ENCODE measurements at regions of chr15 and their contacts with region 1.

Region 1: GRCh38 chr15:90101969-90102890 is at the start of gene IDH2:
- DNase-seq: peak; percentile 75 to 86
- ATAC-seq: peak; percentile 75 to 94 (median 82)
- H3K4me3 ChIP-seq: peak within 1 kb of the TSS; percentile 64 to 100 (median 93)
- H3K27ac ChIP-seq: peak within 1 kb of the TSS; percentile 97 to 100 (median 99)
- H3K4me1 ChIP-seq: peaks cover 5 to 80% (median 50%) of the 10 kb centered on the region in 9 donors
- H3K27me3 ChIP-seq: no peaks in the 10 kb centered on the region
- CTCF ChIP-seq: peak in 1 of 9 donors; percentile 4
- total RNA-seq, gene IDH2: 731 to 1,135 (median 971) TPM

Region 2: DNA sequence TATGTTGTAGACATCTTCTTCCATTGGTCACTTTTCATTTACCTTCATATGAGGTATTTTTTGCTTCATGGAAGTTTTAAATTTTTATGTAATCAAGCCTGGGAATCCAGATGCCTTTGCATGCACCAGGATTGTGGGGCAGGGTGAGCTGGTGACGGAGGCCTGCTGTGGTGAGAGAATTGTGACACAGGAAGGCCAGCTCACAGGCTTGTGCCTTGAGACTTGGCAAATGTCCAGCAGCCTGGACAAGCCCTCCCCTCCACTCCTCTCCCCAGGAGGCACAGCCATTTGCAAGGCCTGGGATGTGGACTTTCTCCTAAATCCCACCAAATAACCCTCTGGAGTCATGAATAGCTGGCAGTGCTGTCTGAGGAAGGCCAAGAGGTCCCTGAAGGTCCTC is 673.2 kb before region 1 on chr15:
- intact Hi-C with region 1: no loop called
- DNase-seq: no peak
- ATAC-seq: no peak
- H3K4me3 ChIP-seq: no peak overlapping the region
- H3K27ac ChIP-seq: no peak overlapping the region
- H3K4me1 ChIP-seq: peaks cover 0 to 16% (median 7%) of the 10 kb centered on the region in 9 donors
- H3K27me3 ChIP-seq: peaks cover 0 to 36% (median 23%) of the 10 kb centered on the region in 7 donors
- CTCF ChIP-seq: no peak

Region 3: DNA sequence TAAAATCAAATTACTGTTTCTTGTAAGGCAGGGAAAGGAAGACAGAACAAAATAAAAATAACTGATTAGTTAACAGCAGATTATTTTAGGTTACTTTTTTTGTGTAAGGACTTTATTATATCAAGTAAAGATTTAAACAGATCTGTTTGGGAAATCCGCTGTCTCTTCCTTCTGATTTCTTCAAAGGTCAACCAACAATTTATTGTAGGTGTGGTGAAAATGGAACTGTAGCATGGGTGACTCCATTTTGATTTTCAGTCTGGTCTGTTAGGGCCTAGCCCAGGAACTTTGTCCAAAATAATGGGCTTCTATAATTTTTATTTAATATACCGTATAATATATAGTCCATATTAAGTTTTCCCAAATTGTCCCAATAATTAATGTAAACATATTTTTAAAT is 13.6 kb after region 1 on chr15:
- intact Hi-C with region 1: no loop called
- DNase-seq: no peak
- ATAC-seq: no peak
- H3K4me3 ChIP-seq: no peak overlapping the region
- H3K27ac ChIP-seq: no peak overlapping the region
- H3K4me1 ChIP-seq: no peaks in the 10 kb centered on the region
- H3K27me3 ChIP-seq: no peaks in the 10 kb centered on the region
- CTCF ChIP-seq: no peak

Region 4: DNA sequence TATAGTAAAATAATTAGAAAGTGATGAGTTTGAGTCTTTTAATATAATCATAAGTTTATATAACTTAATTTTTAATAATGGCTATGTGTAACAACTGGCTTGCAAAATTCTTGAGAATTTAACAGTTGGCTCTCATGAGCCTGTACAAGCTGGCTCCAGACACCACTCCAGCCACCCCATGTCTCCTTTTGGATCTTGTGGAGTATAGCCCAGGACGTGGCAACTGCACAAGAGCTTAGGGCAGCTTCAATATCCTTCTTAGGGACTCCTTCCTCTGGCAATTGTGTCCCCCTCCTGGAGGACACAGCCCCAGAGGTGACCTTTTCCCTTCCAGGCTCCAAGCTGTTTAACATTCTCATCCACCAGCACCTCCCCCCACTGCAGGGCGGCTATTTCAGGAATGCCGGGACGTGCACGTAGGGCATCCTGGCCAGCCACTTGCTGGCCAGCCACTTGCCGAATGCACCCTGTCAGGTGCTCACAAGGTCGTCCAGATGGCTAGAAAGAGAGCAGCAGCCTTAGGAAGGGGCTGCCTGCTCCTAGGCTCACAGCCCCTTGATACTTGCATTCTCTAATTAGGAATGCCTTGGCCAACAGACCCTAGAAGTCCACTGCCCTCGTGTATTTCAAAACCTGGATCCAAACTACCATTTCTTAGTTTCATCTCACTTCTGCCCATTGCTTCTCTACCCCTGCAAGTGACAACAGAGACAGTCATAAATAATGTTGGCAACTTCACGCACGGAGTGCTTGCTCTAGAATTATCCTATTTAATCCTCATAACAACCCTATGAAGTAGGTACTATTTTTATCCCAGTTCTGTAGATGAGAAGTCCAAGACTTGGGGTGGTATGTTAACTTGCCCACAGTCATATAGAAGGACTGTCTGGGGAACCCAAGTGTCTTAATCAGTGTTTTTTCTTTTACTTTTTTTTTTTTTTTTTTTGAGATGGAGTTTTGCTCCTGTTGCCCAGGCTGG is 24.5 kb after region 1 on chr15:
- intact Hi-C with region 1: loop called in 2 of 10 experiments (anchors 2 kb)
- DNase-seq: peak; percentile 67 to 71
- ATAC-seq: peak; percentile 70 to 96 (median 90)
- H3K4me3 ChIP-seq: no peak overlapping the region
- H3K27ac ChIP-seq: peak overlapping the region; percentile 17 to 89 (median 80)
- H3K4me1 ChIP-seq: peaks cover 0 to 19% (median 4%) of the 10 kb centered on the region in 9 donors
- H3K27me3 ChIP-seq: peaks cover 0 to 3% (median 0%) of the 10 kb centered on the region in 7 donors
- CTCF ChIP-seq: no peak

Region 5: DNA sequence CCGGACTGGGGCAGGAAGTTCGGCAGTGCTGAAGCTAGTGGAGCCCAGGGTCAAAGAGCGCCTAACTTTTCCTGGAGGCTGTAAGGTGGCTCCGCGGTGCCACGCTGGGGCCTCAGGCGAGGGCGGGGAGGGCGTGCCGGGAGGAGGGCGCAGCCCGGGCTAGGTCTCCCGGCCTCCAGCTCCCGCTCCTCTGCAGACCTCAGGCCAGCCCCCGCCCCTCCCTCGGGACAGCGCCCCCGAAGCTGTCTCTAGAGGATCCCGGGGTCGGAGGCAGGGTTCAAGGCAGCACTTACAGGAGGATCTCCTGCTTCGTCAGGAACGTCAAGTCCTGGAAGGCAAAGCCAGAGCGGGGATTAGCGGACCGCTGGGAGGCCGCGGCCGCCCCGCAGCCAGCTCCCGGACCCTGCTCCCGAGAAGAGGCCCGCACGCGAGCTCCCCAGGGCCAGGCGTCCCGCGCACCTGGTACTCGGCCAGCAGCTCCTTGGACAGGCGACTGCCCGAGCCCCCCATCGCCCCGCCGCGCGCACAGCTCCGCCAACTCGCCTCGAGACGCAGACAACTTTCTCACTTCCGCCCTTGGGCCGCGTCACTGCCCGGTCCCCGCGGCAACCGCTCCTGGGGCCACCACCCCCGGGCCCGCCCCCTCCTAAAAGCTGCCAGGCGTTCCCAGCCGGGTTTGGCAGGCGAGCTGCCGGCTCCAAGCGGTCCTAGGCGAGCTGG is 131.3 kb after region 1 on chr15 and contains the start of gene CIB1:
- intact Hi-C with region 1: loop called in 2 of 10 experiments (anchors 5 to 10 kb)
- DNase-seq: peak; percentile 97 to 98
- ATAC-seq: peak; percentile 92 to 98 (median 95)
- H3K4me3 ChIP-seq: peak within 1 kb of the TSS; percentile 63 to 100 (median 90)
- H3K27ac ChIP-seq: peak within 1 kb of the TSS; percentile 77 to 98 (median 92)
- H3K4me1 ChIP-seq: peaks cover 4 to 56% (median 47%) of the 10 kb centered on the region in 9 donors
- H3K27me3 ChIP-seq: no peaks in the 10 kb centered on the region
- CTCF ChIP-seq: peak in 8 of 9 donors; percentile 11 to 61 (median 44)
- total RNA-seq, gene CIB1: 70.5 to 95.6 (median 77.7) TPM

Region 6: DNA sequence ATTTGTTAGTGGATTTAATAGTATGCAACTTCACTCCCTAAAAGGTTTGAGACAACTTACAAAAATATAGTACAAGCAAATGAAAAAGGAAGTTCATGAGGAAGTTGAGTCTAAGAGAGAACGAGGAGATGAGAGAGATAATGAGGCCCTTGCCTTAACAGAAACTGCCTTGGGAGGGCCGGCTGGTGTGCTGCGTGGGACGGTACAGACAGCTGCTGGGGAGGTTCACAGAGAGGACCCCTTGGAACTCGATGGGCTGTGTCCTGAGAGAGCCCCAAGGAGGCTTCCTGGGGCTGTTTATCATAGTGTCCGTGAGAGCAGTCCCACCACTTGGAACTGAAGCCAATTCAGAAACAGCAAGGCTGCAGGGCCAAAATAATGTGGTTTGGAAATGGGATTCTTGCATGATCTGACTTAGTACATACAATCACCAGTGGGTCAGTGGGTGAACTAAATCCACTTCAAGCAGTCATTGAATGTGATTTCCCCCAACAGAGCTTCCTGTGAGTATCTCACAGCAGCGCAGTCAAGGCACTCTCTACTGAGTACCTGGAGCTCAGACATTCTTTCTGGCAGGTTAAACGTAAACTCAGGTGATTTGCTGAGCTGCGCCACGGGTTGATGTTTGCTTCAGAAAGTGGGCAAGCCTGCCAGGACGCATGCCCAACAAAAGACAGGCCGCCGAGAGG is 518.3 kb after region 1 on chr15:
- intact Hi-C with region 1: no loop called
- DNase-seq: no peak
- ATAC-seq: peak in 6 of 8 donors; percentile 18 to 48 (median 22)
- H3K4me3 ChIP-seq: no peak overlapping the region
- H3K27ac ChIP-seq: peak overlapping the region in 4 of 10 donors; percentile 26 to 31 (median 29)
- H3K4me1 ChIP-seq: peaks cover 0 to 23% (median 3%) of the 10 kb centered on the region in 9 donors
- H3K27me3 ChIP-seq: no peaks in the 10 kb centered on the region
- CTCF ChIP-seq: no peak

Measured in heart right ventricle (tissue), 16 donors.